GM12878 (cell line): ENCODE measurements at regions of chr11 and their contacts with region 1.

Region 1: GRCh38 chr11:130434521-130435223 is 6.3 kb upstream of the ADAMTS8 start:
- DNase-seq: peak; percentile 44
- ATAC-seq: peak; percentile 94
- H3K4me3 ChIP-seq: peak overlapping the region; percentile 71
- H3K27ac ChIP-seq: no peak overlapping the region
- H3K4me1 ChIP-seq: no peaks in the 10 kb centered on the region
- H3K27me3 ChIP-seq: peaks cover 3 to 8% of the 10 kb centered on the region in 2 experiments
- CTCF ChIP-seq: peak; percentile 80 to 91 (median 90)
- EP300 ChIP-seq: no peak
- POLR2A ChIP-seq: no peak
- RAD21 ChIP-seq: peak; percentile 75

Region 2: GRCh38 chr11:130213143-130213978 is 221.3 kb before region 1 on chr11:
- CTCF ChIA-PET with region 1: interaction called, 50 read pairs
- POLR2A ChIA-PET with region 1: no interaction called
- RAD21 ChIA-PET with region 1: interaction called, 21 read pairs
- SMC1A ChIA-PET with region 1: interaction called, 43 read pairs
- in situ Hi-C with region 1: loop called (anchors 10 kb)
- intact Hi-C with region 1: loop called (anchors 1 kb)
- DNase-seq: no peak
- ATAC-seq: peak; percentile 95
- H3K4me3 ChIP-seq: no peak overlapping the region
- H3K27ac ChIP-seq: no peak overlapping the region
- H3K4me1 ChIP-seq: no peaks in the 10 kb centered on the region
- H3K27me3 ChIP-seq: no peaks in the 10 kb centered on the region
- CTCF ChIP-seq: peak; percentile 92 to 94 (median 94); a peak in 5 of 6 replicates
- EP300 ChIP-seq: no peak
- POLR2A ChIP-seq: no peak
- RAD21 ChIP-seq: peak; percentile 97

Region 3: GRCh38 chr11:130689222-130689908 is 254.7 kb after region 1 on chr11:
- CTCF ChIA-PET with region 1: no interaction called
- POLR2A ChIA-PET with region 1: no interaction called
- RAD21 ChIA-PET with region 1: no interaction called
- SMC1A ChIA-PET with region 1: no interaction called
- in situ Hi-C with region 1: no loop called
- intact Hi-C with region 1: loop called (anchors 10 kb)
- DNase-seq: no peak
- ATAC-seq: no peak
- H3K4me3 ChIP-seq: no peak overlapping the region
- H3K27ac ChIP-seq: no peak overlapping the region
- H3K4me1 ChIP-seq: no peaks in the 10 kb centered on the region
- H3K27me3 ChIP-seq: no peaks in the 10 kb centered on the region; a peak in 1 of 4 replicates
- CTCF ChIP-seq: no peak
- EP300 ChIP-seq: no peak
- POLR2A ChIP-seq: no peak
- RAD21 ChIP-seq: no peak

Region 4: GRCh38 chr11:130827451-130828377 is 393.0 kb after region 1 on chr11:
- CTCF ChIA-PET with region 1: interaction called, 17 read pairs
- POLR2A ChIA-PET with region 1: no interaction called
- RAD21 ChIA-PET with region 1: interaction called, 4 read pairs
- SMC1A ChIA-PET with region 1: interaction called, 3 read pairs
- in situ Hi-C with region 1: no loop called
- intact Hi-C with region 1: loop called (anchors 1 kb)
- DNase-seq: no peak
- ATAC-seq: peak; percentile 73
- H3K4me3 ChIP-seq: no peak overlapping the region
- H3K27ac ChIP-seq: no peak overlapping the region
- H3K4me1 ChIP-seq: no peaks in the 10 kb centered on the region
- H3K27me3 ChIP-seq: peaks cover 0 to 5% of the 10 kb centered on the region in 2 experiments; a peak in 2 of 4 replicates
- CTCF ChIP-seq: peak; percentile 30 to 45 (median 34); a peak in 4 of 6 replicates
- EP300 ChIP-seq: no peak
- POLR2A ChIP-seq: no peak
- RAD21 ChIP-seq: peak; percentile 50

Region 5: GRCh38 chr11:130874955-130875531 is 440.4 kb after region 1 on chr11:
- CTCF ChIA-PET with region 1: interaction called, 23 read pairs
- POLR2A ChIA-PET with region 1: no interaction called
- RAD21 ChIA-PET with region 1: interaction called, 4 read pairs
- SMC1A ChIA-PET with region 1: no interaction called
- in situ Hi-C with region 1: no loop called
- intact Hi-C with region 1: no loop called
- DNase-seq: no peak
- ATAC-seq: no peak
- H3K4me3 ChIP-seq: no peak overlapping the region
- H3K27ac ChIP-seq: no peak overlapping the region
- H3K4me1 ChIP-seq: no peaks in the 10 kb centered on the region
- H3K27me3 ChIP-seq: no peaks in the 10 kb centered on the region
- CTCF ChIP-seq: no peak
- EP300 ChIP-seq: no peak
- POLR2A ChIP-seq: no peak
- RAD21 ChIP-seq: no peak

Region 6: DNA sequence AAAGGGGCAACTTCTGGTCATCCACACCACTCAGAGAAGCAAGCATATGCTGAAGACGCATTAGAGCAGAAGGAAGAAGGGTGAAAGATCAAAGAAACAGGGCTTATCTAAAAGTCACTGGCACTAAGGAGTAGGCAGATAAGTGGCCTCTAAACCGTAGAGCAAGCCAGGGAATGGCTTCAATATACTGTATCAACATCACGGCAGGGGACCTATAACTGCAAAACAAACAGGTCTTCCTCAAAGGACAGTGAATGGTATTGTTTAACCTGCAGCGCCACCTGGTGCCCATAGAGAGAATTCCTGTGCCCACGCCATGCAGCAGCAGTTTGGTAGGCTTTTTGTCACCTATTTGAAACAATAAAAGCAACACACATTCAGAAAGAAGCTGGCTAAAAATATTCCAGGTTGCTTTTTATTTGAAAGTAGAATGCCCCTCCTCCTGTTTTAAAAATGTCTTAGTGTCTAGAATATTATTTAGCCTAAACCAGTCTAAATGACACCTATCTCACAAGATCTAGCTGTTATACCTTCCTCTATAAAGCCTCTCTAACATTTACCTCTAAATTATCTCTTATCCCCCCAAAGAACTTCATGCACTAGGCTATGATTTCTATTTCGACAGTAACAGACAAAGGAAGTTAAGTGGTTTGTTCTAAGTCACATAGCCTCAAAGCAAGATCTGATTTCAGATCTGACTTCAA is 459.8 kb after region 1 on chr11:
- CTCF ChIA-PET with region 1: interaction called, 39 read pairs
- POLR2A ChIA-PET with region 1: no interaction called
- RAD21 ChIA-PET with region 1: interaction called, 5 read pairs
- SMC1A ChIA-PET with region 1: interaction called, 14 read pairs
- in situ Hi-C with region 1: no loop called
- intact Hi-C with region 1: loop called (anchors 1 kb)
- DNase-seq: peak; percentile 15
- ATAC-seq: peak; percentile 99
- H3K4me3 ChIP-seq: no peak overlapping the region
- H3K27ac ChIP-seq: no peak overlapping the region
- H3K4me1 ChIP-seq: no peaks in the 10 kb centered on the region
- H3K27me3 ChIP-seq: no peaks in the 10 kb centered on the region
- CTCF ChIP-seq: peak; percentile 81 to 87 (median 85)
- EP300 ChIP-seq: no peak
- POLR2A ChIP-seq: no peak
- RAD21 ChIP-seq: peak; percentile 72